Endothelial cell of umbilical vein (primary cell): ENCODE measurements at regions of chr1 and their contacts with region 1.

Region 1: GRCh38 chr1:209565759-209566678 is 17.5 kb upstream of the CAMK1G start:
- DNase-seq: peak; percentile 62
- H3K4me3 ChIP-seq: no peak overlapping the region
- H3K27ac ChIP-seq: no peak overlapping the region
- H3K4me1 ChIP-seq: no peaks in the 10 kb centered on the region
- H3K27me3 ChIP-seq: peaks cover 12 to 17% of the 10 kb centered on the region in 2 experiments
- CTCF ChIP-seq: peak; percentile 70 to 81
- POLR2A ChIP-seq: no peak

Region 2: DNA sequence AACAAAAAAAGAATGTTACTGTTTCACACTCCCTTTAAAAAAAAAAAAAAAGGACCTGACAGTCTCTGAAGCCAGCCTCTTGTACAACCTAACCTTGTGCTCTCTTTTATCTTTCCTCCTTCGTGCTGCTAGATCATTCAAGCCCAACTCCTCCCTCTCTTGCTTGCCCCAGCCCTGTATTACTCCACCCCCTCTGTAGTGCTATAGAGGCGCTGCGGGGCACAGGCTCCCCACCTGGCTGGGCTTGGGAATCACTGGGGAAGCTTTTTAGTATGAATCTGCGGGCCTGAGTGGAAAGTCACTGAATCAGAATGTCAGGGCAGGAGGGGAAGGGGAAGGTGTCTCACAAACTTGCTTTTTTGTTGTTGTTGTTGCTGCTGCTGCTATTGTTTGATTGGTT is 366.2 kb before region 1 on chr1:
- CTCF ChIA-PET with region 1: interaction called, 10 read pairs
- POLR2A ChIA-PET with region 1: interaction called, 3 read pairs
- dilution Hi-C with region 1: no loop called
- intact Hi-C with region 1: loop called (anchors 1 kb)
- DNase-seq: no peak
- H3K4me3 ChIP-seq: no peak overlapping the region
- H3K27ac ChIP-seq: no peak overlapping the region
- H3K4me1 ChIP-seq: no peaks in the 10 kb centered on the region
- H3K27me3 ChIP-seq: peaks cover 3 to 4% of the 10 kb centered on the region in 2 experiments
- CTCF ChIP-seq: no peak
- POLR2A ChIP-seq: no peak

Region 3: GRCh38 chr1:209354111-209354839 is 211.7 kb before region 1 on chr1:
- CTCF ChIA-PET with region 1: interaction called, 4 read pairs
- POLR2A ChIA-PET with region 1: no interaction called
- dilution Hi-C with region 1: no loop called
- intact Hi-C with region 1: loop called (anchors 5 kb)
- DNase-seq: peak; percentile 57
- H3K4me3 ChIP-seq: no peak overlapping the region
- H3K27ac ChIP-seq: no peak overlapping the region
- H3K4me1 ChIP-seq: no peaks in the 10 kb centered on the region
- H3K27me3 ChIP-seq: peaks cover 0 to 2% of the 10 kb centered on the region in 2 experiments
- CTCF ChIP-seq: peak; percentile 81 to 90
- POLR2A ChIP-seq: no peak

Region 4: DNA sequence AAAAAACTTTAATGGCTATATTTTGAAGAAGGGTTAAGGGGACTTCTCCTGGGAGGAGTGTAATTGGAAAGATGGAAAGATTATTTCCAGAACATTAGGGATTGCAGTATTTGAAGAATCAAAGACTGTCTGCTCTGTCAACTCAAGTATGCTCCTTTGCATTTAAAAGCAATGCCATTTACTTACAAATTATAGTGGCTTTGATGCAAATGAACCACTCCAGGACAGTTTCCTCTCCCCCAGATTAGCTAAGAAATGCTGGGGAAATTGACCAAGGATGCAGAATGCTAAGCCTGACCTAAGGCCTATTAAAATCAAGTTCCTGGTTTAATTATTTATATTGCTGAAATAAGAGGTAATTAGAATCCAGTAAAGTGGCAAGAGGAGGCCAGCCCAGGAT is 93.0 kb before region 1 on chr1:
- CTCF ChIA-PET with region 1: no interaction called
- POLR2A ChIA-PET with region 1: no interaction called
- dilution Hi-C with region 1: no loop called
- intact Hi-C with region 1: no loop called
- DNase-seq: no peak
- H3K4me3 ChIP-seq: no peak overlapping the region
- H3K27ac ChIP-seq: no peak overlapping the region
- H3K4me1 ChIP-seq: no peaks in the 10 kb centered on the region
- H3K27me3 ChIP-seq: no peaks in the 10 kb centered on the region
- CTCF ChIP-seq: no peak
- POLR2A ChIP-seq: no peak

Region 5: GRCh38 chr1:209585672-209586071 is 19.7 kb after region 1 on chr1:
- CTCF ChIA-PET with region 1: interaction called, 65 read pairs
- POLR2A ChIA-PET with region 1: no interaction called
- dilution Hi-C with region 1: no loop called
- intact Hi-C with region 1: no loop called
- DNase-seq: no peak
- H3K4me3 ChIP-seq: no peak overlapping the region
- H3K27ac ChIP-seq: no peak overlapping the region
- H3K4me1 ChIP-seq: peaks cover 9% of the 10 kb centered on the region
- H3K27me3 ChIP-seq: peaks cover 42 to 43% of the 10 kb centered on the region in 2 experiments
- CTCF ChIP-seq: no peak
- POLR2A ChIP-seq: no peak

Region 6: GRCh38 chr1:209651148-209651547 is 85.1 kb after region 1 on chr1:
- CTCF ChIA-PET with region 1: interaction called, 15 read pairs
- POLR2A ChIA-PET with region 1: no interaction called
- dilution Hi-C with region 1: no loop called
- intact Hi-C with region 1: no loop called
- DNase-seq: peak; percentile 77
- H3K4me3 ChIP-seq: no peak overlapping the region
- H3K27ac ChIP-seq: peak overlapping the region; percentile 60
- H3K4me1 ChIP-seq: peaks cover 27% of the 10 kb centered on the region
- H3K27me3 ChIP-seq: no peaks in the 10 kb centered on the region
- CTCF ChIP-seq: no peak
- POLR2A ChIP-seq: no peak

Region 7: DNA sequence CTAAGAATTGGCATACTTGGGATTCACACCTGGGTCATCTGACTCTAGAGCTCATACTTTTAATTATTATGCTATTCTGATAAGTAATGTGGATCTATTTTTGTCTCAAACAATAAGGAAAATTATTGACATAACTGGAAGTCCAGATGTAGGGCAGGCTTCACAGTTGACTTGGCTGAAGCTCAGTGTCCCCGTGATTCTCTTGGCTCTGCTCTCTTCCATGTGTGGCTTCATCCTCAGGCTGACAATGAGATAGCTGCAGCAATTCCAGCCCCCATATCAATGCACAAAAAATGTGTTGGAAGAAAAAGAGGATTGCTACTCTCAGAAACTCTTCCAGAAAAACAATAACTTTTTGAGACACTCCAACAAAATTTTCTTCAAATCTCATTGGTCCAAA is 162.4 kb after region 1 on chr1:
- CTCF ChIA-PET with region 1: interaction called, 12 read pairs
- POLR2A ChIA-PET with region 1: no interaction called
- dilution Hi-C with region 1: no loop called
- intact Hi-C with region 1: no loop called
- DNase-seq: no peak
- H3K4me3 ChIP-seq: no peak overlapping the region
- H3K27ac ChIP-seq: no peak overlapping the region
- H3K4me1 ChIP-seq: no peaks in the 10 kb centered on the region
- H3K27me3 ChIP-seq: peaks cover 0 to 10% of the 10 kb centered on the region in 2 experiments
- CTCF ChIP-seq: no peak
- POLR2A ChIP-seq: no peak